MCF 10A (cell line): ENCODE measurements at regions of chr11 and their contacts with region 1.

Region 1: DNA sequence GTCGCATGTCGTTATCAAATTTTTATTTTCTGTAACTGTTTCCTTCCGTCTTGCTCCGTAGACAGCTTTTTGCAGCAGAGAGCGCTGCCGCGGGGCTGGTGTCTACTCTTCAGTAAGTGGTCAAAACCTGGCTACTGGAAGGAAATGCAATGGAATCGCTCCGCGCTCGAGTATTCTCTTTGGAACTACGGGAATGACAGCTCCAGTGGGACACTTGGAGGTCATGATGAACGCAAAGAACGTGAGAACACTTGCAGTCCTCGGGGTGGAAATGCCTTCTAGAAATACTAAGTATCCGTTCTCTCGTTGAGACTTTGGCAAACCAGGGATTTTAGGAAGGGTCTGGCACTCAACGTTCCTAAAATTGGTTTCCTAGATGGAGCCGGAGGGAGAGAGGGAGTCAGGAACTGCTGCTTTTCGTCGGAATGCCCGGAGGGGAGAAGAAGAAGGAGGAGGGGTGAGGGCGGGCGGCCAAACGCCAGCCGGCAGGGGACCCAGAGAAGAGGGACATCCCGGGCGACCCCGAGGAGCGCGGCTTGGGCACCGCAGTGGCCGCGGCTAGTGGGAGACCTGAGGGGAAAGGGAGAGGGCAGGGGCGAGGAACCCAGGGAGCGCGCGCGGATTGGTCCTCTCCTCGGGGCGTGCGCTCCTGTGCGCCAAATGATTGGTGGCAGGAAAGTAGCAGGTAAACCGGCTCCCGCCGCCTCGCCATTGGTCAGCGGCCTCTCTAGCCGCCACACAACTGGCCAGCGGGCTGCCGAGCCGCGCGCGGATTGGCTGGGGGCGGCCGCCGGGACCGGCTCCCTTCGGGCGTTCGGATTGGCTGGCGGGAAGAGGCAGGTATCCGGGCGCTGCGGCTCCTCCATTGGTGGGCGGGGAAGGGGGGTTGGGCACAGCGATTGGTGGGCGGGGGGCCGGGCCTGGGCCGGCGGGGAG is 490 bp upstream of the BMAL1 start:
- DNase-seq: peak; percentile 98
- H3K4me3 Mint-ChIP-seq: peak overlapping the region; percentile 91
- H3K27ac Mint-ChIP-seq: no peak overlapping the region
- H3K4me1 Mint-ChIP-seq: peaks cover 31% of the 10 kb centered on the region
- H3K27me3 Mint-ChIP-seq: no peaks in the 10 kb centered on the region
- CTCF ChIP-seq: no peak

Region 2: DNA sequence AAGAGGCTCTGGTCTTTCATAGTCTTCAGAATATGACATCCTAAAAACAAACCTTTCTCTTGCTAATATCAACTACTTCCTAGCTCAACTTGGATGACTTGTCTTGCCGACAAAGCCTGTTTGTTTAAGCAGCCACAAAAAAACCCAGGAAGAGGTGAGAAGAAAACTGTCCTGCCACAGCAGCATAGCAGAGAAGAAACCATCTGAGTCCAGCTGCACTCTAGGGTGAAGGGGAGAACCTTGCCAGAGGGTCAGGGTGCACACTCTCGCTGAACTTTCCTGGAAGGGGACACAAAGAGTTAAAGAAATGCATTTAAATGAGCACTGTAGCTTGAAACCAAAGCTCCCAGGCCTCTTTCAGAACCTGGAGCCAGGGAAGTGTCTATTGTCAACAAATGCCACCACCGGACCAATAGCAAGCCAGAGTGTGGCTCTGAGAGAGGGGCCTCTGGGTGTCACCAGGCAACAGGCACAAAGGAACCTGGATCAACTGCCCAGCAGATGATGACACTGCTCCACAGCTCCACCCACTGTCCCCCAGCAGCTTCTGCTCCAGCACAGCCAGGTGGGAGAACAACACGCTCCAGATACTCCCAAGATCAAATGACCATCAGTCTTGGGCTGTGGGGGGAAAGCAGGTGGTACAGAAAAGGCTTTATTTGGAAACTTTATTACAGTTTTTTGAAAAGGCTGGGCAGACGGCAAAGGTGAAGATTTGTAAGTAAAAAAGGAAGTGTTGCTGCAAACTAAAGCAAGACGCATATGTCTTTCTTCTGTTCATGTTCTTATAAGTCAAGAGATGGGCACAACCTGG is 162.3 kb before region 1 on chr11:
- CTCF ChIA-PET with region 1: no interaction called
- POLR2A ChIA-PET with region 1: no interaction called
- intact Hi-C with region 1: no loop called
- DNase-seq: no peak
- H3K4me3 Mint-ChIP-seq: no peak overlapping the region
- H3K27ac Mint-ChIP-seq: no peak overlapping the region
- H3K4me1 Mint-ChIP-seq: peaks cover 15% of the 10 kb centered on the region
- H3K27me3 Mint-ChIP-seq: no peaks in the 10 kb centered on the region
- CTCF ChIP-seq: no peak

Region 3: GRCh38 chr11:13216019-13216710 is 60.9 kb before region 1 on chr11:
- CTCF ChIA-PET with region 1: no interaction called
- POLR2A ChIA-PET with region 1: interaction called, 18 read pairs
- intact Hi-C with region 1: loop called (anchors 1 kb)
- DNase-seq: peak; percentile 92
- H3K4me3 Mint-ChIP-seq: peak overlapping the region; percentile 32
- H3K27ac Mint-ChIP-seq: peak overlapping the region; percentile 85
- H3K4me1 Mint-ChIP-seq: peaks cover 26% of the 10 kb centered on the region
- H3K27me3 Mint-ChIP-seq: no peaks in the 10 kb centered on the region
- CTCF ChIP-seq: no peak

Region 4: DNA sequence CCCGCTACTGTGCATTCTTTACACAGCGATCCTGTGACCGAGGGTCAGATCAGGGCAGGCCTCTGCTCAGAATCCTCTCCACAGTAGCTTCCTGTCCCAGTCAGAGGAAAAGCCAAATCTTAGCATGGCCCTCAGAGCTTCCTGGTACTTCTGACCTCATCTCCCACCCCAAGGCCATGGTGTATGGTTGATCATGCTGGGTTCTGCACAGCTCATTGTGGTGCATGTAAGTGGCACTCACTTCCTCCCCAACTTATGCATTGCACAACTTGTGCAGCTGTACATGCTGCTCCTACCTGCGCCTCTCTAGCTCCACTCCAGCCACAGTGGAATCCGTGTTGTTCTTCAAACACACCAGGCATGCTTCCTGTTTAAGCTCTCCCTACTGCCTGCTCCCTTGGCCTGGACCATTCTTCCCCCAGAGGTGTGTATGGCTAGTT is 20.8 kb after region 1 on chr11:
- CTCF ChIA-PET with region 1: interaction called, 4 read pairs
- POLR2A ChIA-PET with region 1: interaction called, 11 read pairs
- intact Hi-C with region 1: no loop called
- DNase-seq: peak; percentile 52
- H3K4me3 Mint-ChIP-seq: no peak overlapping the region
- H3K27ac Mint-ChIP-seq: no peak overlapping the region
- H3K4me1 Mint-ChIP-seq: peaks cover 31% of the 10 kb centered on the region
- H3K27me3 Mint-ChIP-seq: no peaks in the 10 kb centered on the region
- CTCF ChIP-seq: no peak

Region 5: GRCh38 chr11:13316528-13316961 is 39.4 kb after region 1 on chr11:
- CTCF ChIA-PET with region 1: no interaction called
- POLR2A ChIA-PET with region 1: interaction called, 28 read pairs
- intact Hi-C with region 1: no loop called
- DNase-seq: peak; percentile 85
- H3K4me3 Mint-ChIP-seq: no peak overlapping the region
- H3K27ac Mint-ChIP-seq: peak overlapping the region; percentile 87
- H3K4me1 Mint-ChIP-seq: peaks cover 64% of the 10 kb centered on the region
- H3K27me3 Mint-ChIP-seq: no peaks in the 10 kb centered on the region
- CTCF ChIP-seq: no peak